ENCODE measurements at regions of chr7 and their contacts with region 1.

Region 1: DNA sequence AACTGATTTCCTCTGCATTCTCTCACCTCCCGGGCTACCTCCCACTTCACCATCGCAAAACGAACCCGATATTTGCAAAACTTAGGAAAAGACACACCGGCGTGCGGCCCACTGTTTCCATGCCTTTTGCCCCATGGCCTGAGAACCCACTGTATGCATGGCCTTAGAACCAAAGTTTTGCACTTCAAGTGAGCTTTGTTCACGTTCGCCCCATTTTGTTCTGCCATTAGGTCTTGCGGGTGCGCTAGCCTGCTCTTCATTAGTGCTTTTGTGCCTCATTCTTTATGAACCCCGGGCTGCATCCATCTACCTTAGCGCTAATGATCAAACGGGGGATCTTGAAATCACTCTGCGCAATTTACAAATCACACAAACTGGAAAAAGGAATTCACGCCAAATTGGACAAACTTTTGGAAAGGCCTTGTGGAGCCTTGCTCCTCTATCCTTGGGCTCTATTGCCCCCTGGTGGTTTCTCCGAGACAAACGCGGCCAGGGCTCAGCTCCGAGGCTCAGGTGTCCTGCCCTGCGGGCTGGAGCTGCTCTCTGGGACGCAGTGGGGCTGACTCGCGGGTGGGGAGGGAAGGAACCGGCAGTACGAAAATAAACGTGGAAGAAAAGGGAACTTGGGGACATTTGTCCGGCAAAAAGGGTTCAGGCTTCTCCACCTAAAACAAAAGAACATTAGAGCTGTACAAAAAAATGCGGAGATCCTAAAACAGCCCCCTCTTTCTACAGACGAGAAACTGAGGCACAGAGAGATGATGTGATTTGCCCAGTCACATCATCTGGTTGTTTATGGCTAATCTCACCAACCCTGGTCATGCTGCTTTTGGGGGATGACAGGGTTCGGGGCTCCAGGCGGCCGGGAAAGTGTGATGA is 300.4 kb upstream of the NFE2L3 start:
- DNase-seq: peak; percentile 90 to 95
- H3K4me3 ChIP-seq: peak overlapping the region; percentile 29 to 33
- H3K27ac ChIP-seq: peak overlapping the region; percentile 83 to 93
- H3K4me1 ChIP-seq: peaks cover 4 to 84% (median 51%) of the 10 kb centered on the region in 4 donors
- H3K27me3 ChIP-seq: no peaks in the 10 kb centered on the region
- CTCF ChIP-seq: peak; percentile 86 to 94

Region 2: DNA sequence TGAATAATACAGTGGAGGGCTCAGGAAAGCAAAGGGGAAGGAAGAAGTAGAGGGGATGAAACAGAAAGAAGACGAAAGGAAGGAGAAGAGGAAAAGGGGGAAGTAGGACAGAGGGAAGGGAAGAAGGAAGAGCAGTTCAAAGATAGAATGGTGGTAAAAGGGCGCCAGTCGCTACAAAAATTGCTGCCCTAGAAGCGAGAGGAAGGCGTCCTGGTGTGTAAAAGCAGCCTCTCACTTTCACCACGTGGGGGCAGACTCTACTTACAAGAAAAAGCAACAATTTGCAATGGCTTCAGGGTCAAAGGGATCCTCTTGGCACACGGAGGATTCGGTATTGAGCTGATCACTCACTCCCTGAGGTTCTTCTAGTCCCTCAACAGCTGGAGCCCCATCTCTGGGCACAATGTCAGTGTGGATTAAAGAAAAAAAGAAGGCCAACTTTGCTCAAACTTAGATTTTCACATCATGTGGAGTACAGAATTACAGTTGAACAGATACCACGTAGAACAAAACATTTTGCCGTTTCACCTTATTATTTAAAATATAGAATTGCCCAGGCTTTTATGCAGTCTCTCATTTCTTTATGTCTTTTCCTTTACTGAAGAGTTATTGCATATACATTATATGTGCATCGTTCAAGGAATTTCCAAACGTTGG is 591.9 kb before region 1 on chr7:
- intact Hi-C with region 1: loop called (anchors 5 kb)
- DNase-seq: peak; percentile 66 to 76
- H3K4me3 ChIP-seq: no peak overlapping the region
- H3K27ac ChIP-seq: no peak overlapping the region
- H3K4me1 ChIP-seq: no peaks in the 10 kb centered on the region
- H3K27me3 ChIP-seq: no peaks in the 10 kb centered on the region
- CTCF ChIP-seq: peak; percentile 75 to 80

Region 3: DNA sequence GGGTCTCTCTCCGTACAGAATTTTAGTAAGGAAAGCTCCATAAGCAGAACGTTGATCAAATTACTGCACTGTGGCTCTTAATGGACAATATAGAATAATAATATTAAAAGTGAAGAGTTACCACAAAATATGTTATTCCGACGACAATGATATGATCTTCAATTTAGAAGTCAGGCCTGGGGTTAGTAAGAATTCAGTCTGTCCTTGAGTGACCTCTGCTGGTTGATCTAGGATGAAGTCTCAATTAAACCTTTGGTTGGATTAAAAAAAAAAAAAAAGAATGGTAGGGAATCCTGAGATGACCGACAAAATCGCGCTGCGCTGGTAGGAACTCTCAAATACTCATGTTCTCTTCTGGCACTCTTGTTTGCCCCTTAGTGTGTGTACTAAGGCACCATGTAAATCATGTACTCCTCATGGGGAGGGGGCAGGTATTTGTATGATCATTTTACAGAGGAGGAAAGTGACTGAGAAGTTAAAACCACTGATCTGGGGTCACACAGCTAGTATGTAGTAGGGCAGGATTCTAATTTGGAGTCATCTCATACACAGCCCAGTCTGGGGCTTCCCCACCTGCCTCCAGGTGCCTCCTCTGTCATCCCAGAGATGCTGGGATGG is 462.0 kb before region 1 on chr7:
- intact Hi-C with region 1: loop called (anchors 2 kb)
- DNase-seq: no peak
- H3K4me3 ChIP-seq: no peak overlapping the region
- H3K27ac ChIP-seq: no peak overlapping the region
- H3K4me1 ChIP-seq: peaks cover 0 to 32% (median 14%) of the 10 kb centered on the region in 4 donors
- H3K27me3 ChIP-seq: no peaks in the 10 kb centered on the region
- CTCF ChIP-seq: peak; percentile 57 to 58

Region 4: DNA sequence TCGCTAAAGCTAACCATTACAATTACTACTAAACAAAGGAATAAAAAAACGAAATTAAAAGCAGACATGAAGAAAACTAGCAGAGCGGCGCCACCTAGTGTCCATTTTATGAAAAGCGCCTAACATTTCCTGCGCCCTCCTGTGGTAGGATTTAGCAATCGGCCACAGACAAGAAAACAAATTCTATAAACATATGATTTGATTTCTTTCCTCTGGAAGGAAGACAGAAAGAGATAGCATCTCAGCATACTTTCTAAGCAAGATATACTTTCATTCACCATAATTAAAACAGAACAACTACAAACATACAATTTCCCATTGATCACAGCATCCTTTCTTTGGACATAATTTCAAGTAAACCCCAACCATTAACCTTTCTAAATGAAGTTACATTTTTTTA is 285.6 kb before region 1 on chr7:
- intact Hi-C with region 1: loop called (anchors 1 kb)
- DNase-seq: peak; percentile 58 to 75
- H3K4me3 ChIP-seq: peak overlapping the region in 1 of 2 donors; percentile 17
- H3K27ac ChIP-seq: peak overlapping the region; percentile 72 to 74
- H3K4me1 ChIP-seq: peaks cover 0 to 41% (median 20%) of the 10 kb centered on the region in 4 donors
- H3K27me3 ChIP-seq: no peaks in the 10 kb centered on the region
- CTCF ChIP-seq: peak; percentile 100

Region 5: DNA sequence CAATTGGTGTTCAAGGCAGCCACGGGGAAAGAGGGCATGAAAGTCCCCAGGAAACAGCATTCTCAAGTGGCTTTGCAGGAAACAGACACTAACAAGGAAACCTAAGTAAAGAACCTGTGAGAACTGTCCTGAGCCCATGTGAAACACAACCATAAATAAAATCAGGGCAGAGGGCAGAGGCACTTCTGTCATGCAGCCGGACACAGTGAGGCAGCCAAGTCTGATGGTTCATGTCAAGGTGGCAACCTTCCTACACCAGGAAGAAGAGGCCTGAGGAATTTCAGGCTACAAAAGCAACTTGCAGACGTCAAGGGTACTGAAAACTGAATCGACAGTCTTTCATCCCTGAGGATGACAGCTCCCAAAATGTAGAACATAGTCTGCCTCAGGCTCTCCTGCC is 165.1 kb before region 1 on chr7:
- intact Hi-C with region 1: no loop called
- DNase-seq: no peak
- H3K4me3 ChIP-seq: no peak overlapping the region
- H3K27ac ChIP-seq: no peak overlapping the region
- H3K4me1 ChIP-seq: peaks cover 0 to 26% (median 0%) of the 10 kb centered on the region in 4 donors
- H3K27me3 ChIP-seq: no peaks in the 10 kb centered on the region
- CTCF ChIP-seq: no peak

Region 6: DNA sequence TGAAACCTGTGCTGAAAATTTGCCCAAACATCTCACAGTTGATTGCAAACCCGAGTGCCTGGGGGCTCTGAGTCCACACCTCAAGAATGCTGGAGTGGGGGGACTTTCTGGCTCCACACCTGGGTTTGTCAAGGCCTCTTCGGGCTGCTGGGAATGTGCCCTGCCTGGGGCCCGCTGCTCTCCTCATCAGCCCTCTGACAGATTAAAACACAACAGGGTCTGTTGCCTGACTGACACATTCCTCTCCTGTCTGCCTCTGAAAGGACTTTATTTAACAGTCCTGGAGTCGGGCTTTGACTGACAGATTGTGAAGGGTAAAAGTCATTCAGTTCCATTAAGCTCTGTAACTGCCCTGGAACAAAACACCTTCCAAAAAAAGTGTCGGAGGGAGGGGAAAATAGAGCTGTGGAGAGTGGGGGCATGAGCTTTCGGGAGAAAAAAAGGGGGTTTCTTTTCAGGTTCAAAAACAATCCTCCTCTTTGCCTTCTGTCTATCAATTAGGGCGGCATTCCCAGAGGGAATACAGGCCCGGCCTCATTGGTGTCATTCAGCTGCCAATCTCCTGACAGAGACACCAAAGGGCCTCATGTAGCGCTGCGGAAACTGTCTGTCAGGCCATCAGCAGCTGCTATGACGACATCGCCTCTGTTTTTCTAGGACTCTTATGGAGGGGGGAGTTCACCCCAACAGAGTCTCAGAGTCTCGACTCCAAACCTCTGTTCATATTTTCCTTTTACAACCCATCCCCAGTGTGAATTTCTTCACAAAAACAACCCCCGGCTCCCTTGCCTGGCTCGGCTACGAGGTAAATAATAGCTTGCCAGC is 98.4 kb before region 1 on chr7:
- intact Hi-C with region 1: loop called (anchors 10 kb)
- DNase-seq: peak; percentile 86 to 87
- H3K4me3 ChIP-seq: no peak overlapping the region
- H3K27ac ChIP-seq: peak overlapping the region; percentile 88 to 89
- H3K4me1 ChIP-seq: peaks cover 0 to 65% (median 31%) of the 10 kb centered on the region in 4 donors
- H3K27me3 ChIP-seq: no peaks in the 10 kb centered on the region
- CTCF ChIP-seq: no peak

Region 7: GRCh38 chr7:26200444-26201246 is 349.1 kb after region 1 on chr7 and contains the start of gene HNRNPA2B1:
- intact Hi-C with region 1: loop called (anchors 5 kb)
- DNase-seq: peak; percentile 98
- H3K4me3 ChIP-seq: peak within 1 kb of the TSS; percentile 74 to 91
- H3K27ac ChIP-seq: peak within 1 kb of the TSS; percentile 99
- H3K4me1 ChIP-seq: peaks cover 0 to 50% (median 34%) of the 10 kb centered on the region in 4 donors
- H3K27me3 ChIP-seq: no peaks in the 10 kb centered on the region
- CTCF ChIP-seq: peak in 1 of 2 experiments; percentile 31

Region 8: DNA sequence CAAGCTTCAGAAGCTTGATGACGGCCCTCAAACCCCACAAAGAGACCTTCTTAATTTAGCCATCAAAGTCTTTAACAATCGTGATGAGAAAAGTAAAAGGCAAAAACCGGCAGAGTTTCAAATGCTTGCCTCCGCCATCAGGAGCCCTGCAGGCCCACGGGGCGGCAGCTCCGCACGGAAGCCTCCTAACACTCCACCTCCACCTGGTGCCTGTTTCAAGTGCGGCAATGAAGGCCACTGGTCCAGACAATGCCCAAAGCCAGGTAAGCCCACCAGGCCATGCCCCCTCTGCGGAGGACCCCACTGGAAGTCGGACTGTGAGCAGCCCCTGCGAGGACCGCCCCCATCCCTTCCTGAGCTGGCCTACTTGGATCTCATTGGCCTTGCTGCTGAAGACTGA is 393.6 kb after region 1 on chr7:
- intact Hi-C with region 1: no loop called
- DNase-seq: no peak
- H3K4me3 ChIP-seq: no peak overlapping the region
- H3K27ac ChIP-seq: no peak overlapping the region
- H3K4me1 ChIP-seq: no peaks in the 10 kb centered on the region
- H3K27me3 ChIP-seq: peaks cover 0 to 13% of the 10 kb centered on the region in 2 donors
- CTCF ChIP-seq: no peak